ENCODE measurements at regions of chrX and their contacts with region 1.

Region 1: GRCh38 chrX:30889147-30890140 is at the start of gene TAB3:
- DNase-seq: peak; percentile 95
- ATAC-seq: peak; percentile 91
- H3K4me3 Mint-ChIP-seq: peak within 1 kb of the TSS; percentile 82
- H3K27ac Mint-ChIP-seq: peak within 1 kb of the TSS; percentile 95
- H3K4me1 Mint-ChIP-seq: peaks cover 32% of the 10 kb centered on the region
- H3K27me3 Mint-ChIP-seq: no peaks in the 10 kb centered on the region
- CTCF ChIP-seq: no peak
- total RNA-seq, gene TAB3: 15.5 to 16.5 TPM

Region 2: GRCh38 chrX:30659421-30659820 is 230.0 kb before region 1 on chrX:
- CTCF ChIA-PET with region 1: no interaction called
- POLR2A ChIA-PET with region 1: no interaction called
- intact Hi-C with region 1: loop called (anchors 5 kb)
- DNase-seq: no peak
- ATAC-seq: peak; percentile 80
- H3K4me3 Mint-ChIP-seq: no peak overlapping the region
- H3K27ac Mint-ChIP-seq: peak overlapping the region; percentile 89
- H3K4me1 Mint-ChIP-seq: peaks cover 39% of the 10 kb centered on the region
- H3K27me3 Mint-ChIP-seq: no peaks in the 10 kb centered on the region
- CTCF ChIP-seq: no peak

Region 3: DNA sequence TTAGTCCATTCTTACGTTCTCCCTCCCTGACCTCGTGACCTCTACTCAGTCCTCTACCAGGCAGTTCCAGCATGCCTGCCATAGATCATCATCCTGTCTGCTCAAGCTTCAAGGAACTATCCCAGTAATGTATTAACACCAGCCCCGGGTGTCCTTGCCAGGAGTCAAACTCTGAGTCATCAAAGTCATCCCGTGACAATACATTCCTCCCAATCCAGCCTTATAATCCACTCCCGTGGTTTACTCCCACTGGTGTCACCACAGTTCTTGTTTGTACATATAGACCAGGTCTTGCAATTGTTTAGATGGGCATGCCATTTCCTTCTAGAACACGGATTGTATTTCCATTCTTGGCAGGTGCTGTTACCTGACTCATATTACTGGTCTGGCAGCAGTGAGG is 68.3 kb after region 1 on chrX:
- CTCF ChIA-PET with region 1: no interaction called
- POLR2A ChIA-PET with region 1: no interaction called
- intact Hi-C with region 1: no loop called
- DNase-seq: no peak
- ATAC-seq: no peak
- H3K4me3 Mint-ChIP-seq: no peak overlapping the region
- H3K27ac Mint-ChIP-seq: no peak overlapping the region
- H3K4me1 Mint-ChIP-seq: no peaks in the 10 kb centered on the region
- H3K27me3 Mint-ChIP-seq: no peaks in the 10 kb centered on the region
- CTCF ChIP-seq: no peak

Region 4: DNA sequence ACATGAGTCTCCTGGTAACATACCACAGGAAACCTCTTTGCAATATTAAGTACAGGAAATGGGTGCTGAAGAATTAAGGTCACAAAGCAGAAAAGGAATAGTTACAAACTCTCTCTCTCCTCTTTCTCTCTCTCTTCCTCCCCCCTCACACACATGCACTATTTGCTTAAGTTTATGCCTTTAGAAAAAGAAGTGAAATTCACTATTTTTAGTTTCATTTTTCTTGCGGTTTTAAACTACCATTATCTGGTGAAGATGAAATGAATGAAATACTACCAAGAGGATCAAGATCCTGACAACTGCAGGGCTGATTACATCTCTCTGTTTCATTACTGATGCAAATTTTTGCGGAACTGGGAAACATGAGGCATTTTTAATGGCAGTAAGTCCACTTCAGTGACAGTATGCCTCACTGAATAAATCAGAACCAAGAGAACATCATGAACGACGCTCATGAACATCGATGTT is 246.7 kb after region 1 on chrX:
- CTCF ChIA-PET with region 1: no interaction called
- POLR2A ChIA-PET with region 1: no interaction called
- intact Hi-C with region 1: no loop called
- DNase-seq: no peak
- ATAC-seq: peak; percentile 20
- H3K4me3 Mint-ChIP-seq: peak overlapping the region; percentile 8
- H3K27ac Mint-ChIP-seq: no peak overlapping the region
- H3K4me1 Mint-ChIP-seq: peaks cover 10% of the 10 kb centered on the region
- H3K27me3 Mint-ChIP-seq: no peaks in the 10 kb centered on the region
- CTCF ChIP-seq: no peak